Kidney (tissue), 22 donors: ENCODE measurements at regions of chr11 and their contacts with region 1.

Region 1: DNA sequence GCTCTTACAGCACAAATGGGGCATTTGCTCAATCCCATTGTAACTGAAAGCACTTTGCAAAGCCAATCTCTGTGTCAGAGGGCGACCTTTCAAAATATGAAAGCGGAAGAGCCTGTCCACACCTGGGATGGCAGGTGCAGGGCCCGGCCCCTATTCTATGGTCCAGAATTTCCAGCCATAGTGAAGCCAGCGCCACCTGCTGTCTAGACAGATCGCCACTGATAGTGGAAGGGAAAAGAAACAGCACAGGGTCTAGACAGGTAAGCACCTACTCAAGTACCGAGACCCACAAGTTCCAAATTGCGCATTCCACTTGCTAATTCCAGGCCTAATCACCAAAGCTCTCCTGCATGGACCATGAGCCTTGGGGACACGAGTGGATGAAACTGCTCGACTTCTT is 141.4 kb downstream of the NTM start:
- DNase-seq: peak in 3 of 5 donors; percentile 61 to 62 (median 62)
- H3K4me3 ChIP-seq: no peak overlapping the region
- H3K27ac ChIP-seq: no peak overlapping the region
- H3K4me1 ChIP-seq: no peaks in the 10 kb centered on the region
- H3K27me3 ChIP-seq: no peaks in the 10 kb centered on the region
- CTCF ChIP-seq: peak; percentile 65

Region 2: DNA sequence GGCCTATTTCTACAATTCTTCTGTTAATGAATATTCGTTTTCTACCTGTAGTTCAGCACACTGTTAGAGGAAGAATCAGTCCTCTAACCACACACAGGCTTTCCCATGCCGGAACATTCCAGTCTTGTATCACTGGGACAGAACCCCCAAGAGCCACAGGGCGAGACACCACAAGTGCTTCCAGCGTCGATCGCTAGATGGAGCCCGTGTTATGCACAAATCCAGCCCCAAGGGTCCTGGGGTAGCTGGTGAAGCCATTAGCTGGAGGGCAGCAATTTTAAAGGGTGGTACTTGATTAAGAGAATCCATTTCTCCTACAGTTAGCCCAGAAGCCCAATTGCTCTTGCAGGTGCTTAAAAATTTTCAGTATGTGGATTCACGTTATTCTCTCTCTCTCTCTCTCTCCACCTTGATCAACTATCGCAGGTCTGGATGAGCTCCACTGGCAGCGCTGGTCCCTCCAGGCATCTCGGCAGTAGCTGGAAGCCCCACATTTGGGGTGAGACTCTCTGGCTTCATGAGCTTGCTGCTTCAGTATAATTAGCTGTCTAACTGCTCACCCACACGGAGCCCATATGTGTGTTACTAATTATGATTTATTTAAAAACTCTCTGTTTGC is 447.3 kb before region 1 on chr11:
- intact Hi-C with region 1: loop called (anchors 10 kb)
- DNase-seq: peak; percentile 71 to 83 (median 77)
- H3K4me3 ChIP-seq: no peak overlapping the region
- H3K27ac ChIP-seq: no peak overlapping the region
- H3K4me1 ChIP-seq: no peaks in the 10 kb centered on the region
- H3K27me3 ChIP-seq: no peaks in the 10 kb centered on the region
- CTCF ChIP-seq: peak; percentile 73